BJ (cell line): ENCODE measurements at regions of chr11 and their contacts with region 1.

Region 1: GRCh38 chr11:35605711-35606110 is 12.5 kb upstream of the FJX1 start:
- DNase-seq: no peak
- H3K4me3 ChIP-seq: no peak overlapping the region
- H3K27me3 ChIP-seq: no peaks in the 10 kb centered on the region
- CTCF ChIP-seq: no peak

Region 2: DNA sequence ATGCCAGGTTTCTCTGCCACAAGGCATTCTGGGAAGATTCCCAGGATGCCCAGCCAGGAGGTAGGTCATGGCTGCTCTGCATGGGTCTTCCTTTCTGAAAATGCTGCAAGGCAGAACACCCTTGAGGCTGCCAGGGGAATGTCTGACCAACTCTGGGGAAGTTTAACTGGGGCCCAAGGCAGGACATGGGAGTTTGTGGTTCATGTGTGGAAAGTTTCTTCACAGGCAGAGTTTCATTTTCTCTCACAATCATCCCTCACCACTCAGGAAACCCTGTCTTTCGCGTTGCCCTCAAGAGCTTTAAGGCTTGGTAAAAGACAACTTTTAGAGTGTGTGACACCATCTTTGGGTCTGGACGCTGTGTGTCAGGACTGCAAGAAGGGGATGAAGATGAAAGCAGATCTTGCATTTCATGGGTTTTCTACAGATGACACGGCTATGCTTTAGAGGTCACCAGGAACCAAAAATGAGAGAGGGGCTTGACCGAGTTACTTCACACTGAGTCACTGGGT is 333.3 kb before region 1 on chr11:
- CTCF ChIA-PET with region 1: no interaction called
- POLR2A ChIA-PET with region 1: no interaction called
- DNase-seq: no peak
- H3K4me3 ChIP-seq: no peak overlapping the region
- H3K27me3 ChIP-seq: no peaks in the 10 kb centered on the region
- CTCF ChIP-seq: no peak

Region 3: GRCh38 chr11:35567737-35568465 is 37.8 kb before region 1 on chr11:
- CTCF ChIA-PET with region 1: no interaction called
- POLR2A ChIA-PET with region 1: no interaction called
- DNase-seq: no peak
- H3K4me3 ChIP-seq: no peak overlapping the region
- H3K27me3 ChIP-seq: no peaks in the 10 kb centered on the region
- CTCF ChIP-seq: no peak

Region 4: DNA sequence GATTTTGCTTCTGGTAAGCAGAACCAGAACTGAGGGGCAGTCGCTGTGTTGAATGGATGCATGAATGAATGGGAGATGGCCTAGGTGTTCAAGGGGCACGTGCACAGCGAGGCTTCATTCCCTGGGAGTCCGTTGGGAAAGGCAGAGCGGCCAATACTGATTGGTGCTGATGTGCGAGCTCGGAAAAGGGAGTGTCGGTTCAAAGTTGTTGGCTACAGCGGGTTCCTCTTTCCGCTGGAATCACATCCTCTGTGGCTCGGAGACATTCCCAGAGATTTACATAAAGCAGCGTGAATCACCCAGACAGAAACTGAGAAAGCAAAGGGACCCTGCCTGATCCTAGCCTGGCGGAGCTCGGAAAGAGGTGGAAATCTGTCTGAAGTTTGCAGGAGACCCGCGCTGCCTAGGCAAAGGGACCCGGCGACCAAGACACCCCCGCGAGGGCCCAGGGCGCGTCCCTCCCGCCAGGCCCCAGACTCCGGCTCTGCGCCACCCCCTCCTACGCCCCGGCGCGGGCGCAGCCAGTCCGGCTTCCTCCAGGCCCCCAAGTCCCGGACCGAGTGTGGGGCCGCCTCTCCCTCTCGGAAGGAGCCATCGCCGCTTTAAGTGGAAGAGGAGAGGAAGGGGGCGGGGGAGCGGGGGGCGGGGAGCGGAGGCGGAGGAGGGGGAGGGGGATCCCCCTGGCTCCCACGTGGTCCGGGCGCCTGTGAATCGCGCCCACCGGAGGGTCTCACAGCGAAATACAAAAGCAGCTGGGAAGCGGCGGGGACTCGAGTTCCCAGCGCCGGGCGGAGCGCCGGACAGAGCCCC is 12.2 kb after region 1 on chr11 and contains the start of gene FJX1:
- CTCF ChIA-PET with region 1: interaction called, 17 read pairs
- POLR2A ChIA-PET with region 1: no interaction called
- DNase-seq: peak; percentile 51
- H3K4me3 ChIP-seq: peak within 1 kb of the TSS; percentile 58
- H3K27me3 ChIP-seq: no peaks in the 10 kb centered on the region
- CTCF ChIP-seq: no peak
- polyA plus RNA-seq, gene FJX1: 4.8 and 6.1 TPM in 2 replicates